ENCODE measurements at regions of chr13 and their contacts with region 1.

Region 1: DNA sequence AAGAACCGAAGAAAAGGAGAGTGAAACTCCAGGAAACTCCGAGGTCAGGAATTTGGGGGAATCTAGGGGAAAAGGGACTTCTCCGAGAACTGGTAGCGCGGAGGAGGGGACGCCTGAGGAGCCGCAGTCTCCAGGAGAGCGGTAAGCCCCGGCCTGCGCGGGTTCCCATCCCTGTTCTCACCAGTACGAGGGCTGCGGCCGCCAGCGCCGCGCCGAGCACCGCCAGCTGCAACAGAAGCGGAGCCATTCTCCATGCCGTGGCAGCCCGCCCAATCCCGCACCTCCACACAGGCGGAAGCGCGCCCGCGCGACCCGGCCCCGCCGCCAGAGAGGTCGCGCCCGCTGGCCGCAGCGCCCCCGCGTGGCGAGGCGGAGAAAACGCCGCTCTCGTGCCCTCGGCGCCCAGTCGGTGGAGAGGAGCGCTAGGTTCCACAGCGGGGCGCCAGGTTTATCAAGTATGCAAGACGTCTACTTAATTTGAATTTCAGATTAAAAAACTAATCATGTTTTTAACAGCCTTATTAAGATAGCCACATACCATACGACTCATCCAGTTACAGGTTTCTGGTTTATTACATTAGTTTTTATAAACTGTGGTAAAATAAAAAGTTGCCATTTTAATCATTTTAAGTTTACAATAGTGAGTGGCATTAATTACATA is at the start of gene ALG5:
- DNase-seq: no peak
- H3K4me3 ChIP-seq: peak within 1 kb of the TSS; percentile 93
- CTCF ChIP-seq: peak; percentile 90

Region 2: DNA sequence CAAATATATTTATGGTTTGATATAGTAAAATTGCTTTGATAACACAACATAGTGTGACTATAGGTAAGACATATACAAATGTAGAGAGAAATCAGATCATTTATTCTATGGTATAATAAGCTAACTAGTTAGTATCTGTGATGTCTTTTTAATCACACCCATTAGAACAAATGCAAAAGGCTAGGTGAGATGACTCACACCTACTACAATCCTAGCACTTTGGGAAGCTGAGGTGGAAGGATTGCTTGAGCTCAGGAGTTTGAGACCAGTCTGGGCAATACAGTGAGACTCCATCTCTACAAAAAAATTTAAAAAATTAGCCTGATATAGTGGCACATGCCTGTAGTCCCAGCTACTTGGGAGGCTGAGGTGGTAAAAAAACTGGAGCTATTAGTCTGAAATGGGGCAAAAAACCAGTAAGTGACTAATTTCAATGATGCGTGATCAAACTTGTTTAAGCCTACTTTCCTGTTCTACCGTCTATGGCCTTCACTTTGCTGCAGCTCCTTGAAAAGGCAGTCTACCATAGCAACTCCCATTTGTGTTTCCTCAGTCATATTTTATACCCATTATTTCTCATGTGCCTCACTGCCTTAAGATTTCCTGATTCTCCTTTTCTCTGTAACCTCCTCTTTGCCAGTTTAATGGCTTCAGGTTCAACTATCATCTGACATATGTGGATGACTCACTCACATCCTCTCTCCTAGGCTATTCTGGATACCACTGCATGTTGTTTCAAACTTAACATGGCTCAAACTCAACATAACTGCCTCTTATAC is 12.5 kb before region 1 on chr13:
- CTCF ChIA-PET with region 1: interaction called, 72 read pairs
- POLR2A ChIA-PET with region 1: interaction called, 4 read pairs
- DNase-seq: no peak
- H3K4me3 ChIP-seq: no peak overlapping the region
- CTCF ChIP-seq: no peak

Region 3: DNA sequence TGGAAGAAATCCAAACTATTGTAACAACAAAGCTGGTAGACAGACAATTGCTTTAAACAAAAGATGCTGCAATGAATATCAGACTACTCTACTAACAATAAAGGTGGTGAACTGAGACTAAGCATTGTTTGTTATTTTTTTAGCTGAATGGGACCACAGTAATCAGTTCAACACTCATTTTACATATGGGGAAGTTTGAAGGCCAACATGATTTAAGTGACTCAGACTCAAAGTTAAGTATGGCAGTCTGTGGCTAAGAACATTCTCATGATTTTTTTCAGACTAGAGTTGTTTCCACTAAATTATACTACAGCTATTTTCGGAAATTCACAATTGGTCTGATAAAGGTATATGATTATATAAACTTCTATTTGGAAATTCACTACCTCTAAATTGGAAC is 11.8 kb after region 1 on chr13:
- CTCF ChIA-PET with region 1: interaction called, 21 read pairs
- POLR2A ChIA-PET with region 1: interaction called, 5 read pairs
- DNase-seq: no peak
- H3K4me3 ChIP-seq: no peak overlapping the region
- CTCF ChIP-seq: no peak

Region 4: GRCh38 chr13:37023871-37024270 is 24.7 kb after region 1 on chr13:
- CTCF ChIA-PET with region 1: interaction called, 26 read pairs
- POLR2A ChIA-PET with region 1: interaction called, 3 read pairs
- DNase-seq: no peak
- H3K4me3 ChIP-seq: no peak overlapping the region
- CTCF ChIP-seq: no peak

Region 5: DNA sequence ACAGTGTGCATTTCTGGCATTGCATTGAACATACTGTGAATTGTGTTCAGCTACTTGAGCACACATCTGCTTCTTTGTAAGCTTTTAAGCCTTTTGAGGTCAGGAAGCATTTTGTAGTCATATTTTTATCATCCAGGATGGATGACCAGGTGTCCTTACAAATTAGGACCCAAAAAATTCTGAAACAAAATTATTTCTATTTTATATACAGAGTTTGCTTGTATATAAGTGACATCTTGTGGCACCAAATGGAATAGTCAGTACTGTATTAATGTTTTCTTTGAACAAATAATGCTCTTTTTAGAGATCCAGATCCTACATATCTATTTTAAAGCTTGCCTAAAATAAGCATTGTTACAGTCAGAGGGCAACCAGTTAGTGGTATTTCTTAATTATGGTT is 69.8 kb after region 1 on chr13:
- CTCF ChIA-PET with region 1: interaction called, 24 read pairs
- POLR2A ChIA-PET with region 1: no interaction called
- DNase-seq: no peak
- H3K4me3 ChIP-seq: no peak overlapping the region
- CTCF ChIP-seq: no peak